ENCODE measurements at regions of chr11 and their contacts with region 1.

Region 1: DNA sequence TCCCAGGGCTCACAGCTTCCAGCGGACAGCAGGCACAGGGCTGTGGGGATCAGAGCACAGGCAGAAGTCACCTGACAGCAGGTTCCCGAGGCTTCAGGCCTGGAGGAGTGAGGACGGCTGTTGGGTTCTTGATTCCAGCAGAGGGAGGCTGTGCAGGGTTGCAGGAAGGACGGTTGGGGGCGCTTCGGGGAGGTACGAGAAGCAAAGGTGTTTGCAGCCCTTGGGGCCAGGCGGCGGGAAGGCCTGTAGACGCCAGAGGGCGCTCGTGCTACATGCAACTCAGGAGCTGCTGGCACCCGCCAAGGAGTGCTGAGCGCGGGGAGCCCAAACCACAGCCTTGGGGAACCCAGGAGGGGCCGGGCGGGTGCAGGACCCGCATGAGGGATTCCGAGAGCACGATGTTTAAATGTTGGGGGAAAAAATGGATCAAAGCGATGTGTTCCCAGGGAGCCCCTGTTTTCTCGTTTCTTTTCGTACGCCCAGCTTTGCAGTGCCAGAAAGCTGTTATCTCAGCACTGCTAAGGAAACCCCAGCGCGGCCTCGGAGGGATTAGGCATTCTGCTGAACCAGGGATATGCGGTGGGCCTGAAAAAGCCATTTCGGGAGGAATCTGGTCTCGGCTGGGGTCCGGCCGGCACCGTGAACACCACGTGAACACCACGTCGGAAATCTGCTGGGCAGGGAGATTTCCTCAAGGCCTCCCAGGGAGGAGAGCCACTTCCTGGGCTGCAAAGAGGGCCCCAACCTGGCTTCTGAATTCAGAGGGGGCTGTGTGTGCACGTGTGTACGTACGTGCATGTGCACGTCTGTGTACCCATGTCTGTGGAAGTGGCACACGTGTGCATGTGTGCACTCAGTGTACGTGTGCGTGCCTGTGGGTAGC is 88.1 kb downstream of the KCNQ1 start:
- DNase-seq: peak; percentile 95
- ATAC-seq: peak; percentile 87
- H3K4me3 Mint-ChIP-seq: peak overlapping the region; percentile 82
- H3K27ac Mint-ChIP-seq: peak overlapping the region; percentile 68
- H3K4me1 Mint-ChIP-seq: peaks cover 15% of the 10 kb centered on the region
- H3K27me3 Mint-ChIP-seq: no peaks in the 10 kb centered on the region

Region 2: DNA sequence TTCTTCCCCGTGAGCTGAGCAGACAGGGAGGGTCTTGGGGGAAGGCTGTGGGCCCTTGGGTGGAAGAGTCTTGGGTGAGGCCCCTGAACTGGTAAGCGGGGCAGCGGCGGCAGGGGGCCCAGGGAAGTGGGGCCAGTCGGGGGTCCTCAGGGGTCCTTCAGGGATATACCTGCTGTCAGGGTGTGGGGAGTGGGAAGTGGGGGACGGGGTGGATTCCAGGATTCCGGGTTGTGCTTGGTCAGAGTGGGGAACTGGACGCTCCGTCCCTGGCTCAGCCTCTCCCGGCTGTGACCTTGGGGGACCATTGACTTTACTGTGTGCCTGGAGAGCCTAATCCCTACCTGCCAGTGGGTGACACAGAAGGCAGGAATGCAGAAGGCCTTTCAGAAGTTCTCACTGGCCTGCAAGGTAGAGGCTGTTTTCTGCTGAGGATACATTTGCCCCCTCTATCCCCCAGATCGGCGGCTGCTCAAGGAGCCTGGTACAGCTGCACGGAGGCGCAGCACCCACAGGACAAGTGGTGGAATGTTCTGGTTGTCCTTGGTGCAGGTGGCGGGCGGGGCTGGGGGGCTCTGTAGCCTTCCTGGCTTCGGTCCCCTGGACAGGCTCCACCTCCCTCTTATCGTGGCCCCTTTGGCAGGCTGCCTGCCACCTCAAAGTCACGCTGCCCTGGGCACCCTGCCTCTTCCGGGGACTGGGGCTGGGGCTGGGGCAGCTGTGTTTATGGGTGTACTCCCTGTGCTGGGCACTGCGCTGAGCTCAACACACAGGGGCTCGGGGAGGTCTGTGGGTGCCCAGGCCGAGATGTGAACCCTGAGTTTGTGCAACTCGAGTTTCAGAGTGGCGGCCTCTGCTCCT is 69.8 kb before region 1 on chr11:
- POLR2A ChIA-PET with region 1: no interaction called
- DNase-seq: no peak
- ATAC-seq: no peak
- H3K4me3 Mint-ChIP-seq: no peak overlapping the region
- H3K27ac Mint-ChIP-seq: peak overlapping the region; percentile 45
- H3K4me1 Mint-ChIP-seq: peaks cover 24% of the 10 kb centered on the region
- H3K27me3 Mint-ChIP-seq: peaks cover 2% of the 10 kb centered on the region

Region 3: DNA sequence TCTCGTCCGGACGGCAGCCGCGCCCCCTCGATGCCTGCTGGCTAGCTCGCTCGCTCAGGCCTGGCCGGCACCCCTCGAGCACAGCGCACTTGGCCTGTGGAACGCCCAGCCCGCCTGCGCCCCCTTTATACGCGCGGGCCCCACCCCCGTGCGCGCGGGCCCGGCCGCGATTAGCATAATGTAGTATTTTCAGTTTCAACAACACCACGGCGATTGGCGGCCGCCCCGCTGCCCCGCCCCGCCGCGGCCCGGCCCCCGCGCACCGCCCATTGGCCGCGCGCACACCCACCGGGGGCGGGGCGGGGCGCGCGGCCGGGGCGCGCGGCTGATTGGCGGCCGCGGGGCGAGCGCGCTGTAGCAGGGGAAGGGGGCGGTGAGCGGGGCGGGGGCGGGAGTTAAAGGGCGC is 352.7 kb after region 1 on chr11 and contains the start of gene CDKN1C:
- POLR2A ChIA-PET with region 1: interaction called, 22 read pairs
- DNase-seq: peak; percentile 90
- ATAC-seq: peak; percentile 85
- H3K4me3 Mint-ChIP-seq: peak within 1 kb of the TSS; percentile 94
- H3K27ac Mint-ChIP-seq: peak within 1 kb of the TSS; percentile 61
- H3K4me1 Mint-ChIP-seq: peaks cover 2% of the 10 kb centered on the region
- H3K27me3 Mint-ChIP-seq: peaks cover 30% of the 10 kb centered on the region
- total RNA-seq, gene CDKN1C: 2.9 to 3.1 TPM

Region 4: GRCh38 chr11:2892215-2893020 is 359.5 kb after region 1 on chr11:
- POLR2A ChIA-PET with region 1: interaction called, 22 read pairs
- DNase-seq: peak; percentile 78
- ATAC-seq: peak; percentile 76
- H3K4me3 Mint-ChIP-seq: peak overlapping the region; percentile 83
- H3K27ac Mint-ChIP-seq: peak overlapping the region; percentile 89
- H3K4me1 Mint-ChIP-seq: peaks cover 15% of the 10 kb centered on the region
- H3K27me3 Mint-ChIP-seq: peaks cover 2% of the 10 kb centered on the region

Measured in activated naive CD8-positive, alpha-beta T cell treated with anti-CD3 and anti-CD28 coated beads, Interleukin-2, amount 10 ng/mL, durations not matched to agents 7 days and 5 days (primary cell).